IMR-90 (cell line): ENCODE measurements at regions of chr14 and their contacts with region 1.

Region 1: GRCh38 chr14:77616454-77617229 is at the start of gene SPTLC2:
- DNase-seq: peak; percentile 99
- ATAC-seq: peak; percentile 96
- H3K4me3 ChIP-seq: peak within 1 kb of the TSS; percentile 95
- H3K27ac ChIP-seq: peak within 1 kb of the TSS; percentile 69
- H3K4me1 ChIP-seq: no peaks in the 10 kb centered on the region
- H3K27me3 ChIP-seq: no peaks in the 10 kb centered on the region
- CTCF ChIP-seq: 0 out of 2 replicates have a peak, but pooled peaks have one; percentile 15
- POLR2A ChIP-seq: peak; percentile 84
- RAD21 ChIP-seq: no peak
- total RNA-seq, gene SPTLC2: 68.3 and 100.0 TPM in 2 replicates

Region 2: DNA sequence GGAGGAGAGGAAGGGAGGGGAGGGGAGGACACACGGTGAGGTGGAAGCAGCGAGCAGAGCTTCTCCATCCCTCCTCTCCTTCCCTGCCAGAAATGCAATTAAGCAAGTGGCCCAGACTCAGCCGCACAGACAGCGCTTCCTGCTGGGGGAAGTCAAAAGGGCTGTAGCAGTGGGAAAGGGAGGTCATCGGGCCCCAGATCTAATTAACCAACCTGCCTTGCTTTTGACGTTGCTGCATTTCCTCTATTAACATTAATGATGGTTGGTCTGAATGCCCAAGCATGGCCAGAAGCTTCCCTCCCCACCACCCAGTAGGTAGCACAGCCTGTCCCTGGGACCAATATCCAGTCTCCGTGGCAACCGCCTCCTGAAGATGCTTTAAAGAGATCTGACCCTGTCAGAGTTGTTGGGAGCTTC is 341.0 kb before region 1 on chr14:
- CTCF ChIA-PET with region 1: no interaction called
- POLR2A ChIA-PET with region 1: no interaction called
- dilution Hi-C with region 1: no loop called
- in situ Hi-C with region 1: no loop called
- intact Hi-C with region 1: no loop called
- DNase-seq: no peak
- ATAC-seq: no peak
- H3K4me3 ChIP-seq: no peak overlapping the region
- H3K27ac ChIP-seq: no peak overlapping the region
- H3K4me1 ChIP-seq: no peaks in the 10 kb centered on the region
- H3K27me3 ChIP-seq: peaks cover 12% of the 10 kb centered on the region
- CTCF ChIP-seq: no peak
- POLR2A ChIP-seq: no peak
- RAD21 ChIP-seq: no peak

Region 3: DNA sequence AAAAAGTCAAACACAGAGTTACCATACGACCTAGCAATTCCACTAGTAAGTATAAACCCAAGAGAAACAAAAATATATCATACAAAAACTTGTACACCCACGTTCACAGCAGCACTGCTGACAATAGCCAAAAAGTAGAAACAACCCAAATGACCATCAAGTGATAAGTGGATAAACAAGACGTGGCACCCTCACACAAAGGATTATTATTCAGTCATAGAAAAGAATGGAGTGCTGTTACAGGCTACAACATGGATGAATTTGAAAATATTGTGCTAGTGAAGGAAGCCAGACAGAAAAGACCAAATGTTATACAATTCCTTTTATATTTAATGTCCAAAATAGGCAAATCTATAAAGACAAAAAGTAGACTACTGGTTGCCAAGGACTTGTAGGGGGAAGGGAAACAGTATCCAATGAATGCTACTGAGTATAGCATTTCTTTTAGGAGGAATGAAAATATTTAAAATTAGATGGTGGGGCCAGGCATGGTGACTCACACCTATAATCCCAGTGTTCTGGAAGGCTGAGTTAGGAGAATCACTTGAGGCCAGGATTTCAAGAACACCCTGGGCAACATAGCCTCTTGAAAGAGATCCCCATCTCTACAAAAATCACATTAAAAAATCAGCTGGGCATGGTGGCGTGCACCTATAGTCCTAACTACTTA is 42.1 kb before region 1 on chr14:
- CTCF ChIA-PET with region 1: no interaction called
- POLR2A ChIA-PET with region 1: no interaction called
- dilution Hi-C with region 1: no loop called
- in situ Hi-C with region 1: no loop called
- intact Hi-C with region 1: loop called (anchors 5 kb)
- DNase-seq: peak; percentile 76
- ATAC-seq: peak; percentile 92
- H3K4me3 ChIP-seq: no peak overlapping the region
- H3K27ac ChIP-seq: peak overlapping the region; percentile 92; the same call in 1 of the 2 replicates
- H3K4me1 ChIP-seq: peaks cover 26% of the 10 kb centered on the region
- H3K27me3 ChIP-seq: no peaks in the 10 kb centered on the region
- CTCF ChIP-seq: no peak
- POLR2A ChIP-seq: no peak
- RAD21 ChIP-seq: no peak

Region 4: DNA sequence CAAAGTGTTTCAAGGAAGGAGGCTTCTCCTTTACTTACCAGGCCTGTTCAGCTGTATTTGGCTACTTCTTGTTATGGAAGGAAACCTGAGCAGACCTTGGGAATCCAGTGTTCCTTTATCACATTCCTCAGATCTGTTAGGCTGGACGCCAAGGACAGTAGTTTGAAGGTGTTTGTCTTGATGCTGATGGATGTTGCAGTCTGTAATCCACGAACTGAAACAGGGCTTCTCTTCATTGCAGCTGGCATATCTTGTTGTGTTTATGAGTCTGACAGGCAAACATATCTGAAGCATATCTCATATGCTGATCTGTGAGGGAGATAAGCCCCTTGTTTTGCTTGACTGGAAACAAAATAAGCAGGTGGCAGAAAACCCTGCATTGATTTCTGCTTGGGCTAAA is 1457.9 kb after region 1 on chr14:
- CTCF ChIA-PET with region 1: no interaction called
- POLR2A ChIA-PET with region 1: no interaction called
- dilution Hi-C with region 1: no loop called
- in situ Hi-C with region 1: no loop called
- intact Hi-C with region 1: no loop called
- DNase-seq: no peak
- ATAC-seq: no peak
- H3K4me3 ChIP-seq: no peak overlapping the region
- H3K27ac ChIP-seq: no peak overlapping the region
- H3K4me1 ChIP-seq: no peaks in the 10 kb centered on the region
- H3K27me3 ChIP-seq: peaks cover 30% of the 10 kb centered on the region
- CTCF ChIP-seq: no peak
- POLR2A ChIP-seq: no peak
- RAD21 ChIP-seq: no peak